Natural killer cell (primary cell): ENCODE measurements at regions of chr15 and their contacts with region 1.

Region 1: GRCh38 chr15:55221090-55222011 is 24.6 kb upstream of the RSL24D1 start:
- DNase-seq: peak; percentile 20 to 43
- ATAC-seq: peak; percentile 51 to 70 (median 56)
- H3K4me3 ChIP-seq: no peak overlapping the region
- H3K4me3 Mint-ChIP-seq: peak overlapping the region; percentile 56
- H3K27ac ChIP-seq: peak overlapping the region; percentile 76
- H3K27ac Mint-ChIP-seq: peak overlapping the region; percentile 81 to 91
- H3K4me1 ChIP-seq: peaks cover 35% of the 10 kb centered on the region
- H3K4me1 Mint-ChIP-seq: peaks cover 66 to 71% of the 10 kb centered on the region in 2 donors
- H3K27me3 ChIP-seq: no peaks in the 10 kb centered on the region
- H3K27me3 Mint-ChIP-seq: no peaks in the 10 kb centered on the region
- CTCF ChIP-seq: no peak

Region 2: DNA sequence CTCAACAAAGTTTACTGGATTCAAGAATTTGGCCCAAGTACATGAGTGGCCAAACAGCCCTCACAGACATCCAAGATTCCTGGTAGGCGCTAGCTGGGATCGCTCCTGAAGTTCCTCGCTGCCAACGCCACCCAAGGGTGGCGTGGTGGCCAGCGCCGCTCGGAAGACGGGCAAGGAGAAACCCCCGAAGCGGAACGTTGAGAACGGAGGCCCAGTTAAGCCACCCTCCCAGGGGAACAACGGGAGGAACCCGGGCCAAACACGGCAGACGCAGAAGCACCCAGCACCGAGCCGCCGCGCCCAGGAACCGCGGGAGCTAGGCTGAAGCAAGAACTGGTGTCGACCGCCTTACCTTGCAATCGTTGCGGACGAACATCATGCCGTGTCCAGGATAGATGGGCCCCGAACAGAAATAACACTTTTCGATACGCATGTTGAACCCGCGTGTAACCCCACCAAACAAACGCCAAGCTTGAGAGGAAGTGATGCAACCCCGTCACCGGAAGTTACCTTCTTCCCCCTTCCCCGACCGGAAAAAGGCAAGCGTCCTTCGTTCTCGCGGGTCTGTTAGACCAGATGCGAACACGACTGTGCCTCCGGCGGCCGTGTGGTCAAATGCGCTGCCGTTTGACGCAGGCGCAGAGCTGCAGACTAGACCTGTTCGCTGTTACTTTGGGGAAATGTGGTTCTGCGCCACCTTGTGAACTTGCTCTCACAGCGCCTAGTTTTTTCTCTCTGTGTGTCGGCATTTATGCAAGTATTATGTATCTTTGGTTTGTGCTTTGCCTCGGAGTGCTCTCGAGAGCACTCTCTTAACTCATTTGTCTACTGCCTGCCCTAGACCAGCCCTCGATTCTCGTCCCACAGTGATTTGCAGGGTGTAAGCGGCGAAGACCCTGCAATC is 24.6 kb before region 1 on chr15 and contains the start of gene RSL24D1:
- intact Hi-C with region 1: loop called (anchors 1 kb)
- DNase-seq: peak; percentile 89 to 99
- ATAC-seq: peak; percentile 94 to 99 (median 97)
- H3K4me3 ChIP-seq: peak within 1 kb of the TSS; percentile 82
- H3K4me3 Mint-ChIP-seq: no peak within 1 kb of the TSS
- H3K27ac ChIP-seq: peak within 1 kb of the TSS; percentile 90
- H3K27ac Mint-ChIP-seq: no peak within 1 kb of the TSS
- H3K4me1 ChIP-seq: peaks cover 3% of the 10 kb centered on the region
- H3K4me1 Mint-ChIP-seq: peaks cover 0 to 9% of the 10 kb centered on the region in 2 donors
- H3K27me3 ChIP-seq: no peaks in the 10 kb centered on the region
- H3K27me3 Mint-ChIP-seq: no peaks in the 10 kb centered on the region
- CTCF ChIP-seq: peak; percentile 27
- total RNA-seq, gene RSL24D1: 97.4 to 102 (median 102) TPM

Region 3: DNA sequence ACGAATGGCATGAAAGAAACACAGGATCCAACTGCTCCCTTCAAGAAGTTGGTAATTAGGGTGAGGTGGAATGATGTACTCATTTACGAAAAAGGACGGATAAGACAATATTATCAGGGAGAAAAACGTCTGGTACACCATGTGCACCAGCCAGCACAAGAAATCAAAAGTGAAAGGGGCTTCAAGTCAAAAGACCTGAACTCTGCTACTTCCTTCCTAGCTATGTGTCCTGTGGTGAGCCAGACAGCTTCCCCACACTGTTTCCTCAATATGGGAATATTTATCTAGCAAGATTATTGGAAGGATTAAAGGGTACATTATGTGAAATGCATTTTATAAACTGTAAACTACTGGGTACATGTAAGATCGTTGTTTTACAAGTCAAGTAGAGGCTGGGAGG is 34.4 kb after region 1 on chr15:
- intact Hi-C with region 1: loop called (anchors 5 kb)
- DNase-seq: peak in 1 of 2 donors; percentile 67
- ATAC-seq: peak; percentile 71 to 80 (median 74)
- H3K4me3 ChIP-seq: peak overlapping the region; percentile 42
- H3K4me3 Mint-ChIP-seq: peak overlapping the region; percentile 87
- H3K27ac ChIP-seq: peak overlapping the region; percentile 75
- H3K27ac Mint-ChIP-seq: peak overlapping the region; percentile 91 to 92
- H3K4me1 ChIP-seq: peaks cover 45% of the 10 kb centered on the region
- H3K4me1 Mint-ChIP-seq: peaks cover 70 to 76% of the 10 kb centered on the region in 2 donors
- H3K27me3 ChIP-seq: no peaks in the 10 kb centered on the region
- H3K27me3 Mint-ChIP-seq: no peaks in the 10 kb centered on the region
- CTCF ChIP-seq: no peak

Region 4: GRCh38 chr15:55279746-55280351 is 58.5 kb after region 1 on chr15:
- intact Hi-C with region 1: loop called (anchors 1 kb)
- DNase-seq: peak; percentile 49 to 78
- ATAC-seq: peak; percentile 65 to 76 (median 71)
- H3K4me3 ChIP-seq: no peak overlapping the region
- H3K4me3 Mint-ChIP-seq: peak overlapping the region; percentile 90
- H3K27ac ChIP-seq: peak overlapping the region; percentile 93
- H3K27ac Mint-ChIP-seq: peak overlapping the region; percentile 93 to 99
- H3K4me1 ChIP-seq: peaks cover 80% of the 10 kb centered on the region
- H3K4me1 Mint-ChIP-seq: peaks cover 94 to 96% of the 10 kb centered on the region in 2 donors
- H3K27me3 ChIP-seq: no peaks in the 10 kb centered on the region
- H3K27me3 Mint-ChIP-seq: no peaks in the 10 kb centered on the region
- CTCF ChIP-seq: no peak

Region 5: GRCh38 chr15:55434989-55435825 is 213.9 kb after region 1 on chr15:
- intact Hi-C with region 1: loop called (anchors 5 kb)
- DNase-seq: peak in 1 of 2 donors; percentile 66
- ATAC-seq: peak in 2 of 3 donors; percentile 67
- H3K4me3 ChIP-seq: no peak overlapping the region
- H3K4me3 Mint-ChIP-seq: no peak overlapping the region
- H3K27ac ChIP-seq: no peak overlapping the region
- H3K27ac Mint-ChIP-seq: no peak overlapping the region
- H3K4me1 ChIP-seq: no peaks in the 10 kb centered on the region
- H3K4me1 Mint-ChIP-seq: peaks cover 4% of the 10 kb centered on the region in 2 donors
- H3K27me3 ChIP-seq: no peaks in the 10 kb centered on the region
- H3K27me3 Mint-ChIP-seq: no peaks in the 10 kb centered on the region
- CTCF ChIP-seq: peak; percentile 52